Right lobe of liver (tissue), 6 donors: ENCODE measurements at regions of chrX and their contacts with region 1.

Region 1: DNA sequence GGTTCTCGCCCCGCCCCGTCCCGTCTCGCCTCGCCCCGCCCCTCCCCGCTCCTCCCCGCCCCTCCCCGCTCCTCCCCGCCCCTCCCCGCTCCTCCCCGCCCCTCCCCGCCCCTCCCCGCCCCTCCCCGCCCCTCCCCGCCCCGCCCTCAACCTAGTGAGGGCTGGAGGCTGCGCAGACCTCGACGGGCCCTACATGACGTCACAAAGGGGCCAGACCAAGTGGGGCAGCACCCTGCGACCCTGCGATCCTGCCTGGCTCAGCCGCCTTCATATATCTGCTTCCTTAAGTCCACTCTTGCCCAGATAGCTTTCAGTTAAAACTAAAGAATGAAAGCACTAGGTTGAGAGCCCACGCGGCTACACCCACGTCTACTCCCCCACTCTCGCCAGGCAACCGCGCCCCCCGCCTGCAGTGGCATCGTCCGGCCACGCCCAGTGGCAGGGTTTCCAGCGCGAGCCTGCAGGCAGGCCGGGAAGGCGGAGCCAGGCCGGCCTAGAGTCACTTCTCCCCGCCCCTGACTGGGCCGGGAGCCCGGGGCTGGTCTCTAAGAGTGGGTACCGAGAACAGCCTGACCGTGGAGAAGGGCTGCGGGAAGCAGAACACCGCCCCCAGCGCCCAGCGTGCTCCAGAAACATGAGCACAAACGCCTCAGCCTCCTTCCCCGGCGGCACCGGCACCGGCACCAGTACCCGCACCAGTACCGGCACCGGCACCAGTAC is 1.5 kb upstream of the MAOA start:
- DNase-seq: peak; percentile 93 to 96 (median 94)
- ATAC-seq: peak; percentile 90 to 94 (median 91)
- H3K4me3 ChIP-seq: peak overlapping the region; percentile 30 to 67 (median 60)
- H3K27ac ChIP-seq: peak overlapping the region; percentile 71 to 91 (median 91)
- H3K4me1 ChIP-seq: no peaks in the 10 kb centered on the region
- H3K27me3 ChIP-seq: no peaks in the 10 kb centered on the region
- CTCF ChIP-seq: peak in 3 of 4 donors; percentile 17 to 35 (median 26)
- POLR2A ChIP-seq: peak; percentile 92

Region 2: GRCh38 chrX:43741843-43742573 is 87.4 kb after region 1 on chrX:
- intact Hi-C with region 1: loop called in 1 of 2 experiments (anchors 10 kb)
- DNase-seq: no peak
- ATAC-seq: peak; percentile 16 to 46 (median 27)
- H3K4me3 ChIP-seq: no peak overlapping the region
- H3K27ac ChIP-seq: peak overlapping the region; percentile 29 to 85 (median 57)
- H3K4me1 ChIP-seq: peaks cover 0 to 32% (median 2%) of the 10 kb centered on the region in 4 donors
- H3K27me3 ChIP-seq: no peaks in the 10 kb centered on the region
- CTCF ChIP-seq: no peak
- POLR2A ChIP-seq: no peak

Region 3: DNA sequence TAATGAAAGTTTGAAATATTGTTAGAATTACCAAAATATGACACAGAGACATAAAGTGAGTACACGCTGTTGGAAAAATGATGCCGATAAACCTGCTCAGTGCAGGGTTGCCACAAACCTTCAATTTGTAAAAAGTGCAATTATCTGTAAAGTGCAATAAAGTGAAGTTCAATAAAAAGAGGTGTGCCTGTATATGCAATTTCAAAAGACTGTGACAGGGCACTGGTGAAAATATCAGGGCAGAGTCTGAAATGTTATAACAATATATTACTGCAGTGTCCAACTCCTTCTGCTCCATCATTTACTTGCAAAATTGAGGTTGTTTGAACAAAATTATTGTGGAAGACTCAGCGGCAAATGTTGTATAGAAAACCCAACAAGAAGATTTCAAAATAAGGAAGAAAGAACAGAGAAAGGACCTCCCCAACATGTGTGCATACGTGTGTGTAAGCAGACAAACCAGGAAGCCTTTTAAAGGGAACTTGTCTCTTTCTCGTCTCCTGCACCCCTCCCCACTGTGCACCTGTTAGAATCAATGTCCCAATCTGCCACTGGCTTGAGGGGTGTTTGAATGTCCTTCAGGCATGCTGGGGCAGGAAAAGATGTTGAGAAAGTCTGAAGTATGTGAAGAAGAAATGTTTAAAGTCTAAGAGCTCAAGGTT is 131.5 kb after region 1 on chrX:
- intact Hi-C with region 1: no loop called
- DNase-seq: no peak
- ATAC-seq: no peak
- H3K4me3 ChIP-seq: no peak overlapping the region
- H3K27ac ChIP-seq: no peak overlapping the region
- H3K4me1 ChIP-seq: no peaks in the 10 kb centered on the region
- H3K27me3 ChIP-seq: no peaks in the 10 kb centered on the region
- CTCF ChIP-seq: no peak
- POLR2A ChIP-seq: no peak